Activated CD4-positive, alpha-beta T cell treated with anti-CD3 and anti-CD28 coated beads for 36 hours (primary cell): ENCODE measurements at regions of chr6 and their contacts with region 1.

Region 1: DNA sequence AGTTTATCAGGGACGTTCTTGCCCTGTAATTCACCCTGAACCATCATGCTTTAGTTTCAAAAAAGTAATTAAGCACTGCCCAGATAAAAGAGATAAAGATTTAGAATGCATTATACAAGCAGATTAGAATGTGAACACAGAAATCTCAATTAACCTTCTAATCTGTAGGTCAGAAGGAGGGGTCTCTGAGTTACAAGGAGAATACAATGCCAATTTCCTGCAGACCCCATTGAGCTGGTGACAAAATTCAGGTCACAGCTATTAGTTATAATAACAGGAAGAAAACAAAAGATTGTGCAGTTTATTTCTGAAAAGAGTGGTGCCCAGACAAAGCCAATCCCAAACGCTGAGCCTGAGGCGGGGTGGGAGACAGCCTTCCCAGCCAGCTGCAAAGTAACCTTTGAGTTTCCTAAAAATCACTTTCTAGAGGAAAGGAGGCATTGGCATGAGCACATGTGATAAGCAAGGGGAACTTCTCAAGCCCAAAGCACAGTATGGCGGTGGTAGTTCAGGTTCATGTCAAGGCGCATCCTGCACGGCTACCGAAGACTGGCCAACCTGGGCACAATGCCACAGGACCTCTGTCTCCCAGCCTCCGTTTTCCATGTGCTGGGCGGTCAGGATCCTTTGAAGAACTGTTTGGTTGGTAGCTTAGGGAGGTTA is 192.5 kb downstream of the TTLL2 start:
- DNase-seq: no peak
- ATAC-seq: no peak
- H3K4me3 Mint-ChIP-seq: no peak overlapping the region
- H3K27ac Mint-ChIP-seq: no peak overlapping the region
- H3K4me1 Mint-ChIP-seq: no peaks in the 10 kb centered on the region
- H3K27me3 Mint-ChIP-seq: peaks cover 16% of the 10 kb centered on the region

Region 2: GRCh38 chr6:167550941-167551627 is 33.7 kb after region 1 on chr6:
- CTCF ChIA-PET with region 1: no interaction called
- POLR2A ChIA-PET with region 1: interaction called, 10 read pairs
- intact Hi-C with region 1: no loop called
- DNase-seq: no peak
- ATAC-seq: no peak
- H3K4me3 Mint-ChIP-seq: no peak overlapping the region
- H3K27ac Mint-ChIP-seq: no peak overlapping the region
- H3K4me1 Mint-ChIP-seq: no peaks in the 10 kb centered on the region
- H3K27me3 Mint-ChIP-seq: no peaks in the 10 kb centered on the region